Caco-2 (cell line): ENCODE measurements at regions of chr17 and their contacts with region 1.

Region 1: DNA sequence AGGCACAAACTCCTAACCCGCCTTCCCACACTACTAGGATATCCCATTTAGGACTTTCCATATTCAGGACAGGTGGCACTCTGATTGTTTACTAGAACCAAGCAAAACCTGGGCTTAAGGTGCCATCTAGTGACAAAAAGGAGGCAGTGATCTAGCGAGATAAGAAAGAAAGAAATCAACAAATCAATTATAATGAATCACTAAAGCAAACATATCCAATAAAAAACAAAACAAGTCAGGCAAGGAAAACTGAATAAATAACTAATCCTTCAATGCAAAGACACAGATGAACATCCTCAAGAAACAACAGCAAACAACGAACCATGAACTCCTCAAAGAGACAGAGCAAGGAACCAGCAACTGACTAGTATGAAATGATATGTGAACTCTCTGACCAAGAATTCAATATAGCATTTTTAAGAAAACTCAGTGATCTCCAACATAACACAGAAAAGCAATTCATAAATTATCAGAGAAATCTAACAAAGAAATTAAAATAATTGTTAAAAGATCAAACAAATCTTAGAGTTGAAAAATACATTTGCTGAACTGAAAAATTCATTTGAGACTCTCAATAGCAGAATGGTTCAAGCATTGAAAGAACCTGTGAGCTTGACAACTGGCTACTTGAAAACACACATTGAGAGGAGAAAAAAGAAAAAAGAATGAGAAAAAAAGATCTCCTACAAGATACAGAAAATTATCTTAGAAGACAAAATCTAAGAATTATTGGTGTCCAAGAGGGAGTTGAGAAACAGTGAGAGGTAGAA is 203.7 kb downstream of the CEP112 start:
- DNase-seq: peak in 1 of 2 experiments; percentile 59
- H3K4me3 ChIP-seq: no peak overlapping the region
- H3K4me3 Mint-ChIP-seq: no peak overlapping the region
- H3K27ac Mint-ChIP-seq: no peak overlapping the region
- H3K4me1 ChIP-seq: no peaks in the 10 kb centered on the region
- H3K4me1 Mint-ChIP-seq: no peaks in the 10 kb centered on the region
- H3K27me3 ChIP-seq: no peaks in the 10 kb centered on the region
- H3K27me3 Mint-ChIP-seq: peaks cover 15% of the 10 kb centered on the region
- CTCF ChIP-seq: peak; percentile 64 to 75

Region 2: GRCh38 chr17:65231662-65232335 is 756.5 kb before region 1 on chr17:
- CTCF ChIA-PET with region 1: no interaction called
- POLR2A ChIA-PET with region 1: no interaction called
- intact Hi-C with region 1: loop called (anchors 1 kb)
- DNase-seq: peak; percentile 65 to 77
- H3K4me3 ChIP-seq: no peak overlapping the region
- H3K4me3 Mint-ChIP-seq: no peak overlapping the region
- H3K27ac Mint-ChIP-seq: no peak overlapping the region
- H3K4me1 ChIP-seq: peaks cover 15% of the 10 kb centered on the region
- H3K4me1 Mint-ChIP-seq: peaks cover 27% of the 10 kb centered on the region
- H3K27me3 ChIP-seq: no peaks in the 10 kb centered on the region
- H3K27me3 Mint-ChIP-seq: peaks cover 1% of the 10 kb centered on the region
- CTCF ChIP-seq: peak; percentile 76 to 88

Region 3: GRCh38 chr17:65278050-65278819 is 710.0 kb before region 1 on chr17:
- CTCF ChIA-PET with region 1: no interaction called
- POLR2A ChIA-PET with region 1: no interaction called
- intact Hi-C with region 1: loop called (anchors 1 kb)
- DNase-seq: peak; percentile 81 to 82
- H3K4me3 ChIP-seq: no peak overlapping the region
- H3K4me3 Mint-ChIP-seq: peak overlapping the region; percentile 39
- H3K27ac Mint-ChIP-seq: no peak overlapping the region
- H3K4me1 ChIP-seq: peaks cover 14% of the 10 kb centered on the region; the same call in 1 of the 2 replicates
- H3K4me1 Mint-ChIP-seq: peaks cover 9% of the 10 kb centered on the region
- H3K27me3 ChIP-seq: no peaks in the 10 kb centered on the region
- H3K27me3 Mint-ChIP-seq: peaks cover 4% of the 10 kb centered on the region
- CTCF ChIP-seq: peak; percentile 82 to 89

Region 4: DNA sequence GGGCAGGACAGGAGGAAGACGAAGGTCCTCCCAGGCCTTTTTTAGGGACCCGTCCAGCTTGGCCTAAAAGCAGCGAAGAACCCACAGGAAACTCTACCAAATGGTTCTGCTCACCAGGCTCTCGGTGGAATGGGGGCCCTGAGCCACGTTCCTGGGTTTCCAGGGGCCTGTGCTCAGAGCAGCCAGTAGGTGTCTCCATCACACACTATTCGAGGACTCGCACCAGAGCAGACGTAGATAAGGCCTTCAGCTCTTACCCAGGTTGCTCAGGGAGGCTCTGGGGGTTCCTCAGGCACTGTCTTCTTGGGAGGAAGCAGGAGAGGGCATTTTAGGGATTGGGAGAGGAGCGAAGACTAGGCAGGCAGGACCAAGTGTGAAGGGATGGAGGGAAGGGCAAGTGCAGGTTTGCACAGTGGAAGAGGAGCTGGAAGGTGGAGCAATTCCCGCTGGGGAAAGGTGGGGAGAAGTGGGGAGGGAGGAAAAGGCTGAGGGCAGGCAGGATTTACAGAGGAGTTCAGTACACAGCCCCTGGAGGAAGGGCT is 694.0 kb before region 1 on chr17:
- CTCF ChIA-PET with region 1: interaction called, 3 read pairs
- POLR2A ChIA-PET with region 1: no interaction called
- intact Hi-C with region 1: loop called (anchors 1 kb)
- DNase-seq: peak; percentile 74 to 78
- H3K4me3 ChIP-seq: no peak overlapping the region
- H3K4me3 Mint-ChIP-seq: no peak overlapping the region
- H3K27ac Mint-ChIP-seq: peak overlapping the region; percentile 25
- H3K4me1 ChIP-seq: peaks cover 13% of the 10 kb centered on the region; the same call in 1 of the 2 replicates
- H3K4me1 Mint-ChIP-seq: peaks cover 15% of the 10 kb centered on the region
- H3K27me3 ChIP-seq: no peaks in the 10 kb centered on the region
- H3K27me3 Mint-ChIP-seq: no peaks in the 10 kb centered on the region
- CTCF ChIP-seq: peak; percentile 88 to 90

Region 5: DNA sequence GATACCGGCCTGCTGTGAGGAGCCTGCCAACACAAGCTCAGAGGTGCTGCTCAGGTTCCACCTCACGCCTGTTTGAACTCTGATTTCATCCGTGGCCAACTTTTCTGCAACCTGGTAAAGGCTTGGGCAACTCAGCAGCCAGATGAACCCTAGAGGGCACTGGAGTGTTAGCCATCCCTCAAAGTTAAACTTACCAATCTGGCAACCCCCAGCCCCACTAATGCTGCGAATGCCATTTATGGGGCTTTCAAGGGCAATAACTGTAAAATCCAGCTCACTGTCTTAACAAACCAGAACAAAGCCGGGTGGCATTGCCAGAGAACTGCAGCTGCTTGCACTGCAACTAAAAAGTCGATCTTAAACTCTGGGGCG is 532.3 kb before region 1 on chr17:
- CTCF ChIA-PET with region 1: no interaction called
- POLR2A ChIA-PET with region 1: no interaction called
- intact Hi-C with region 1: loop called (anchors 1 kb)
- DNase-seq: peak in 1 of 2 experiments; percentile 61
- H3K4me3 ChIP-seq: no peak overlapping the region
- H3K4me3 Mint-ChIP-seq: no peak overlapping the region
- H3K27ac Mint-ChIP-seq: no peak overlapping the region
- H3K4me1 ChIP-seq: peaks cover 18% of the 10 kb centered on the region
- H3K4me1 Mint-ChIP-seq: peaks cover 32% of the 10 kb centered on the region
- H3K27me3 ChIP-seq: no peaks in the 10 kb centered on the region
- H3K27me3 Mint-ChIP-seq: no peaks in the 10 kb centered on the region
- CTCF ChIP-seq: peak; percentile 46 to 72

Region 6: DNA sequence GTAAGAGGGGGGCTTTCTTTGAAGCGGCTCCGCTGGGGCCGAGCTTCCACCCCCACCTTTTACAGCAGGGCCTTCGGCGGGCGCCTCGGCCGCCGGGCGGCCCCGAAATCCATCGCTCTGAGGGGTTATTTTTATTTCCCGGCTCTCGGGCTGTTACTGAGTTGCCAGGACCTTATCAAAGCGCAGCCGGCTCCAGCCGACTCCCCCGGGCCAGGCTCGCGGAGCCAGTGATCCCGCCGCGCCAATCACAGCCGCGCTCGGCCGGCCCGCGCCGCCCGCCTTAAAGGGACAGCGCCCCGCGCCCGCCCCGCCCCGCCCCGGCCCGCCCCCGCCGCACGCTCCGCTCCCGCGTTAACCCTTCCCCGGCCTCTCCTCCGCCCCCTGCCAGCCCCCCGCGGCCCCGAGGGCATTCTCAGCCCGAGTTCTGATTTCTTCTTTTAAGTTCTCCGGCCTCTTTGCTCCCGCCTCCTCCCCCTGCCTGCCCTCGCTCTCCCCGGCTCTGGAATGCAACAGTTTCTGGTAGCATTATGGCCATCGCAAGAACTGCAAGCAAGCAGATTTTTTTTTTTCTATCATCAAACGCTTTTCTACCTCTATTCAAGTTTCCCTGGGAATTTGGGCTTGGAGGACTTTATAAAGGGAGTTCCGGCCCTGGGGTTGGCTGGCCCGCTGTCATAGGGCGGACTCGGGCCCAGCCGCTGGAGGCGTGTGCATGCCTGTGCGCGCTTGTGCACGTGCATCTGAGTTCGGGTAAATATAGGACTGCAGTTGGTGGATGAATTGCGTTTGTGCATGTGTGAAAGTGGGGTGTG is 426.7 kb before region 1 on chr17 and contains the start of gene AXIN2:
- CTCF ChIA-PET with region 1: no interaction called
- POLR2A ChIA-PET with region 1: no interaction called
- intact Hi-C with region 1: loop called (anchors 5 kb)
- DNase-seq: peak; percentile 96 to 97
- H3K4me3 ChIP-seq: peak within 1 kb of the TSS; percentile 86
- H3K4me3 Mint-ChIP-seq: no peak within 1 kb of the TSS
- H3K27ac Mint-ChIP-seq: peak within 1 kb of the TSS; percentile 91
- H3K4me1 ChIP-seq: peaks cover 44% of the 10 kb centered on the region
- H3K4me1 Mint-ChIP-seq: peaks cover 24% of the 10 kb centered on the region
- H3K27me3 ChIP-seq: no peaks in the 10 kb centered on the region
- H3K27me3 Mint-ChIP-seq: no peaks in the 10 kb centered on the region
- CTCF ChIP-seq: peak; percentile 25 to 33
- total RNA-seq, gene AXIN2: 141 and 168 TPM in 2 replicates

Region 7: GRCh38 chr17:66165513-66166123 is 177.4 kb after region 1 on chr17:
- CTCF ChIA-PET with region 1: no interaction called
- POLR2A ChIA-PET with region 1: no interaction called
- intact Hi-C with region 1: loop called (anchors 1 kb)
- DNase-seq: peak in 1 of 2 experiments; percentile 55
- H3K4me3 ChIP-seq: no peak overlapping the region
- H3K4me3 Mint-ChIP-seq: no peak overlapping the region
- H3K27ac Mint-ChIP-seq: no peak overlapping the region
- H3K4me1 ChIP-seq: no peaks in the 10 kb centered on the region
- H3K4me1 Mint-ChIP-seq: no peaks in the 10 kb centered on the region
- H3K27me3 ChIP-seq: no peaks in the 10 kb centered on the region
- H3K27me3 Mint-ChIP-seq: no peaks in the 10 kb centered on the region
- CTCF ChIP-seq: peak; percentile 63 to 76